ENCODE measurements at regions of chr14 and their contacts with region 1.

Region 1: DNA sequence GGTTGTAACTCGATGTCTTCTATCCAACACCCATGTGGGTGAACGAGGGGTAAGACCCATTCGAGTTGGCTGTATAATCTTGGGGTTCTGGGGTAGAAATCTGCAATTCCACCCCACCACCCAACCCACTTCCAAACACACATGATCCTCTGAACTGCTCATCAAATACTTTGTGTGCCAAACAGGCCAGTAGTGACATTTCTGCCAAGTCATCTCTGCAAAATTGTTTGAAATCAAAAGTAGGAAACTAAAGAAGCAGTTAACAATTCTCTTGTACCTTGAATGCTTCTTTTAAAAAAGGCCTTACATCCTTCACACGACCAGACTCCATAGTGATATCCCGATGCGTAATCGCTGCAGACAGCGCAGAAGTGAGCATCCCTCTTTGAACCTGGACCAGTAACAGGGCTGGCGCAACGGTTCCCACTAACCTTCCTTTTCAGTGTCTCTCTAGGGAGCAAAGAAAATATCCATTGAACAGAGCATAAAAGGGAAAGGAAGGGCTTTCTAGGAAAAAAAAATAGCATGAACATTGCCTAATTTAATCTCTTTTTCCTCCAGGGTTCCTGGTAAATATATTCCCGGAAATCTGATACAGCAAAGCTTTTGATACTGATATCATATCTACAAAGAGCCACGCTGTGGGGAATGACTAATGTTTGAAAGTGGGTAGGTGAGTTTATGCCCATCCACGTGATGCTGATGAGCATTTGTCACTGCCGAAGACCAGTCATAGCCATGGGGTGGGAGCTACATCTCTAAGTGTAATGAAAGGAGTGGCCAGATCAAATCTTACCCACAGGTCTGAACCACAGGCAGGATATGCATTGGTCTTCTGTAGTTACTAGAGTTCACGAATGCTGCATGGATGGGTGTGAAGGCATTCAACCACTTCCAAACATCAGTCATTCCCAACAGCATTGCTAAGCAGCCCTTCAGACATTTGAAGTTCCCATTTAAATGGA is 14.2 kb downstream of the ESR2 start:
- DNase-seq: no peak
- H3K27ac ChIP-seq: no peak overlapping the region
- CTCF ChIP-seq: no peak

Region 2: GRCh38 chr14:64159588-64159987 is 120.4 kb before region 1 on chr14:
- CTCF ChIA-PET with region 1: no interaction called
- POLR2A ChIA-PET with region 1: interaction called, 11 read pairs
- DNase-seq: no peak
- H3K27ac ChIP-seq: no peak overlapping the region
- CTCF ChIP-seq: no peak

Region 3: GRCh38 chr14:64303471-64303917 is 23.5 kb after region 1 on chr14:
- CTCF ChIA-PET with region 1: no interaction called
- POLR2A ChIA-PET with region 1: no interaction called
- DNase-seq: peak; percentile 64
- H3K27ac ChIP-seq: no peak overlapping the region
- CTCF ChIP-seq: peak; percentile 84